Endothelial cell of umbilical vein (primary cell): ENCODE measurements at regions of chr20 and their contacts with region 1.

Region 1: GRCh38 chr20:63537525-63538203 is 488 bp upstream of the PTK6 start:
- DNase-seq: peak; percentile 90
- H3K4me3 ChIP-seq: peak overlapping the region in 1 of 3 experiments; percentile 34
- H3K27ac ChIP-seq: no peak overlapping the region
- H3K4me1 ChIP-seq: no peaks in the 10 kb centered on the region
- H3K27me3 ChIP-seq: no peaks in the 10 kb centered on the region
- CTCF ChIP-seq: peak; percentile 86 to 98
- POLR2A ChIP-seq: peak; percentile 41

Region 2: GRCh38 chr20:63495741-63496595 is 41.7 kb before region 1 on chr20:
- CTCF ChIA-PET with region 1: interaction called, 30 read pairs
- POLR2A ChIA-PET with region 1: no interaction called
- dilution Hi-C with region 1: no loop called
- intact Hi-C with region 1: no loop called
- DNase-seq: peak; percentile 44
- H3K4me3 ChIP-seq: no peak overlapping the region
- H3K27ac ChIP-seq: no peak overlapping the region
- H3K4me1 ChIP-seq: no peaks in the 10 kb centered on the region
- H3K27me3 ChIP-seq: no peaks in the 10 kb centered on the region
- CTCF ChIP-seq: peak; percentile 92 to 96
- POLR2A ChIP-seq: no peak

Region 3: GRCh38 chr20:63567386-63568169 is 29.9 kb after region 1 on chr20:
- CTCF ChIA-PET with region 1: no interaction called
- POLR2A ChIA-PET with region 1: no interaction called
- dilution Hi-C with region 1: no loop called
- intact Hi-C with region 1: no loop called
- DNase-seq: no peak
- H3K4me3 ChIP-seq: no peak overlapping the region
- H3K27ac ChIP-seq: no peak overlapping the region
- H3K4me1 ChIP-seq: no peaks in the 10 kb centered on the region
- H3K27me3 ChIP-seq: no peaks in the 10 kb centered on the region
- CTCF ChIP-seq: no peak
- POLR2A ChIP-seq: no peak

Region 4: GRCh38 chr20:63775096-63775978 is 237.7 kb after region 1 on chr20:
- CTCF ChIA-PET with region 1: interaction called, 9 read pairs
- POLR2A ChIA-PET with region 1: no interaction called
- dilution Hi-C with region 1: no loop called
- intact Hi-C with region 1: loop called (anchors 2 kb)
- DNase-seq: peak; percentile 60
- H3K4me3 ChIP-seq: peak overlapping the region in 2 of 3 experiments; percentile 17 to 26
- H3K27ac ChIP-seq: no peak overlapping the region
- H3K4me1 ChIP-seq: peaks cover 6% of the 10 kb centered on the region
- H3K27me3 ChIP-seq: no peaks in the 10 kb centered on the region
- CTCF ChIP-seq: peak; percentile 86 to 94
- POLR2A ChIP-seq: no peak

Region 5: DNA sequence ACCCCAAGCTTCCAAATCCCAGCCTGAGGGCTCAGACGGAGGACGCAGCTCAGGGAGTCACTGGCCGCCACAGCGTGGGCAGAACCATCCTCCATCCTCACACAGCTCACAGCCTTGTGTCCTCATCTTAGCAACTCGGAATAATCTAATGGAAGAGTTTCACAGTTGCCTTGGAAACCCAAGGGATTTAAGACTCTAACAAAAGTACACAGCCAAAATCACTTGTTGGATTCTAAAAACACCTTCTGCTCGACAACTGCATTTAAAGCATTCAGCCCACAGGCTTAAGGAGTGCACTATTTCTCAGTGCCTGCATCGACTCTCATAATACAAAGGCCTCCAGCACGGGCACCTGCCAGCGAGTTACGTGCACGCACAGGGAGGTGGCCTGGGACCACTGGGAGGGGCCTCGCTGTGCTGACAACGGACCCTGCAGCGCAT is 248.0 kb after region 1 on chr20:
- CTCF ChIA-PET with region 1: no interaction called
- POLR2A ChIA-PET with region 1: no interaction called
- dilution Hi-C with region 1: no loop called
- intact Hi-C with region 1: no loop called
- DNase-seq: no peak
- H3K4me3 ChIP-seq: no peak overlapping the region
- H3K27ac ChIP-seq: no peak overlapping the region
- H3K4me1 ChIP-seq: no peaks in the 10 kb centered on the region
- H3K27me3 ChIP-seq: no peaks in the 10 kb centered on the region
- CTCF ChIP-seq: no peak
- POLR2A ChIP-seq: no peak

Region 6: DNA sequence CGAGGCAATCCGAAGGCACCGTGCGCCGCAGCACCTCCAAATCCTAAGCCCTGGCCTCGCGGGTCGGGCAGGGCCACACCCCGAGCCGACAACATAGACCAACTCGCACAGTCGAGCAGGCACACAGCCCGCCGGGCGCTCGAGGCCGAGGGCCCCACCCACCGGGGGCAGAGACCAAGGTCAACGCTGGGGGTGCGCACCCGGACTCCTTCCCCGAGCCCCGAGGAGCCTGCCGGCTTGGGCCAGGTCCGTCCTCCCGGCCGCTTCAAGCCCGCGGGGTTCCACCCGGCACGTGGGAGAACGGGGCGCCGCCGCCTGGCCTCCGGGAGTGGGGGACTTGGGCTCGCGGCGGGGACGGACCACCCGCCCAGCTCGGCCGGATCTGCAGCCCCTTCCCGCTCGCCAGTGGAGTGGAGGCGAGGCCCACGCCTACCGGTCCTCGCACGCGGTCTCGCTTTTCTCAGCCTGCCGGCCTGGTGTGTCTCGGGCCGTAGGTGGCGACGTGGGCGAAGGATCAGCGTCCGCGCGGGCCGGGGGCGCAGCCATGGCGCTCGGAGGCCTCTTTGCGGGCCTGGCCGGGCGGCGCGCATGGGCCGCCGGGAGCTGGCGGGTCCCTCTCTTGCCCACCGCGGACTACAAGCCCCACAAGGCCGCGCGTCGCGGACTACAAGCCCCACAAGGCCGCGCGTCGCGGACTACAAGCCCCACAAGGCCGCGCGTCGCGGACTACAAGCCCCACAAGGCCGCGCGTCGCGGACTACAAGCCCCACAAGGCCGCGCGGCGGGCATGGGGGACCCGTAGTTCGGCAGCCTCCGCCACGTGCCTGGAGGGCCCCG is 418.4 kb after region 1 on chr20 and contains the start of gene UCKL1:
- CTCF ChIA-PET with region 1: interaction called, 9 read pairs
- POLR2A ChIA-PET with region 1: no interaction called
- dilution Hi-C with region 1: no loop called
- intact Hi-C with region 1: loop called (anchors 1 kb)
- DNase-seq: peak; percentile 93
- H3K4me3 ChIP-seq: peak within 1 kb of the TSS; percentile 38 to 78 (median 76)
- H3K27ac ChIP-seq: peak within 1 kb of the TSS; percentile 42
- H3K4me1 ChIP-seq: peaks cover 10% of the 10 kb centered on the region
- H3K27me3 ChIP-seq: no peaks in the 10 kb centered on the region
- CTCF ChIP-seq: no peak
- POLR2A ChIP-seq: peak; percentile 89
- total RNA-seq, gene UCKL1: 51.1 TPM in 2 replicates

Region 7: GRCh38 chr20:63980806-63981728 is 443.4 kb after region 1 on chr20 and contains the start of gene PRPF6:
- CTCF ChIA-PET with region 1: interaction called, 89 read pairs
- POLR2A ChIA-PET with region 1: no interaction called
- dilution Hi-C with region 1: no loop called
- intact Hi-C with region 1: no loop called
- DNase-seq: peak; percentile 94
- H3K4me3 ChIP-seq: peak within 1 kb of the TSS; percentile 25 to 67 (median 58)
- H3K27ac ChIP-seq: peak within 1 kb of the TSS; percentile 6
- H3K4me1 ChIP-seq: peaks cover 20% of the 10 kb centered on the region
- H3K27me3 ChIP-seq: no peaks in the 10 kb centered on the region
- CTCF ChIP-seq: peak; percentile 87 to 95
- POLR2A ChIP-seq: peak; percentile 66
- total RNA-seq, gene PRPF6: 64.2 and 67.4 TPM in 2 replicates

Region 8: GRCh38 chr20:64062596-64063388 is 525.1 kb after region 1 on chr20 and contains the start of gene TCEA2:
- CTCF ChIA-PET with region 1: interaction called, 7 read pairs
- POLR2A ChIA-PET with region 1: no interaction called
- dilution Hi-C with region 1: no loop called
- intact Hi-C with region 1: loop called (anchors 2 kb)
- DNase-seq: peak; percentile 93
- H3K4me3 ChIP-seq: peak within 1 kb of the TSS; percentile 72 to 91 (median 84)
- H3K27ac ChIP-seq: peak within 1 kb of the TSS; percentile 63
- H3K4me1 ChIP-seq: peaks cover 18% of the 10 kb centered on the region
- H3K27me3 ChIP-seq: no peaks in the 10 kb centered on the region
- CTCF ChIP-seq: no peak
- POLR2A ChIP-seq: peak; percentile 87
- total RNA-seq, gene TCEA2: 65.5 and 71.3 TPM in 2 replicates